ENCODE measurements at regions of chr10 and their contacts with region 1.

Region 1: GRCh38 chr10:112446855-112447711 is at the starts of genes VTI1A and ZDHHC6:
- DNase-seq: peak; percentile 89
- ATAC-seq: peak; percentile 94
- H3K4me3 Mint-ChIP-seq: peak within 1 kb of the TSS; percentile 89
- H3K27ac Mint-ChIP-seq: peak within 1 kb of the TSS; percentile 96
- H3K4me1 Mint-ChIP-seq: peaks cover 40% of the 10 kb centered on the region
- H3K27me3 Mint-ChIP-seq: no peaks in the 10 kb centered on the region
- total RNA-seq, gene VTI1A: 40.2 to 43.7 TPM
- total RNA-seq, gene ZDHHC6: 49.0 to 51.5 TPM

Region 2: GRCh38 chr10:112286837-112287818 is 160.0 kb before region 1 on chr10:
- CTCF ChIA-PET with region 1: no interaction called
- POLR2A ChIA-PET with region 1: no interaction called
- DNase-seq: no peak
- ATAC-seq: no peak
- H3K4me3 Mint-ChIP-seq: no peak overlapping the region
- H3K27ac Mint-ChIP-seq: no peak overlapping the region
- H3K4me1 Mint-ChIP-seq: no peaks in the 10 kb centered on the region
- H3K27me3 Mint-ChIP-seq: peaks cover 5% of the 10 kb centered on the region

Region 3: GRCh38 chr10:112461029-112461887 is 14.2 kb after region 1 on chr10:
- CTCF ChIA-PET with region 1: interaction called, 3 read pairs
- POLR2A ChIA-PET with region 1: interaction called, 11 read pairs
- DNase-seq: peak; percentile 25
- ATAC-seq: peak; percentile 42
- H3K4me3 Mint-ChIP-seq: no peak overlapping the region
- H3K27ac Mint-ChIP-seq: peak overlapping the region; percentile 6
- H3K4me1 Mint-ChIP-seq: peaks cover 2% of the 10 kb centered on the region
- H3K27me3 Mint-ChIP-seq: no peaks in the 10 kb centered on the region

Measured in activated CD8-positive, alpha-beta T cell treated with anti-CD3 and anti-CD28 coated beads, Interleukin-2, amount 10 ng/mL, durations not matched to agents 7 days and 5 days (primary cell).